Activated CD8-positive, alpha-beta memory T cell treated with anti-CD3 and anti-CD28 coated beads, Interleukin-2, amount 10 ng/mL, durations not matched to agents 7 days and 5 days (primary cell): ENCODE measurements at regions of chr6 and their contacts with region 1.

Region 1: GRCh38 chr6:32971581-32972352 is 3.4 kb downstream of the BRD2 start:
- DNase-seq: peak; percentile 100
- ATAC-seq: peak; percentile 41
- H3K4me3 Mint-ChIP-seq: peak overlapping the region; percentile 94
- H3K27ac Mint-ChIP-seq: peak overlapping the region; percentile 99
- H3K4me1 Mint-ChIP-seq: peaks cover 24% of the 10 kb centered on the region
- H3K27me3 Mint-ChIP-seq: no peaks in the 10 kb centered on the region

Region 2: DNA sequence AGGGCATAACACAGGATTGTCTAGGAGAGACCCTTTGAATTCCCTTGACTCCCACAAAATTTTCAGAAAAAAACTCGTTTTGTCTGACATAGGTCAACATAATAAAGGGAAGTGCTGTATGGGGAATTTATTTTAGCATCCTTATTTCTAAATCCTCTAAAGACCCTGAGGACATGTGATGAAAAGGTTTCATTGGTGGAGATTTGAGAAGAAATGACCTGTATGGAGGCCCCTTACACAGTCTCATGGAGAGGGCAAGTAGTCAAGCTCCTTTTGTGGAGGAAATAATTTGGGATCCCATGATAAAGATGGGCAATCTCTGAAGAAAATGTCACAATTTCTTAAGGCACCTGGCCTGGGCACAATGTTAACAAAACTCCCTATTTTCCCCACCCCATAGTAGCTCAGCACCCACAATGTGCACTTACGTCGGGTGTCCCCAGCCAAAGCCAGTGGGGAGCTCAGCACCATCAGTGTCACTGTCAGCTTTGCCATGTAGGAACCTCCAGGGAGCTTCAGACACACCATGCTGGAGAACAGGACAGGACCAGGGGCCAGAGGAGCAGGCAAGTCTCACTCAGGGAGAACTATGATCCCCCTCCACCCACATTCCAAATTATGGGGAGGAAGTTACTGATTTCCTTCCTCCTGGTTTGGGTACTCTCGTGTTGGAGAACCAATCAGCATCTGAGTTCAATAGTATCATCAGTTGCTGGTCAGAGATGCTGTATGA is 441.9 kb before region 1 on chr6 and contains the start of gene HLA-DRB5:
- CTCF ChIA-PET with region 1: no interaction called
- DNase-seq: peak; percentile 49
- ATAC-seq: peak; percentile 91
- H3K4me3 Mint-ChIP-seq: peak within 1 kb of the TSS; percentile 87
- H3K27ac Mint-ChIP-seq: peak within 1 kb of the TSS; percentile 88
- H3K4me1 Mint-ChIP-seq: peaks cover 12% of the 10 kb centered on the region
- H3K27me3 Mint-ChIP-seq: peaks cover 4% of the 10 kb centered on the region
- total RNA-seq, gene HLA-DRB5: 2.9 to 5.3 TPM

Region 3: GRCh38 chr6:32843979-32844838 is 127.6 kb before region 1 on chr6 and contains the start of gene PSMB8:
- CTCF ChIA-PET with region 1: interaction called, 62 read pairs
- DNase-seq: peak; percentile 100
- ATAC-seq: peak; percentile 74
- H3K4me3 Mint-ChIP-seq: peak within 1 kb of the TSS; percentile 86
- H3K27ac Mint-ChIP-seq: peak within 1 kb of the TSS; percentile 95
- H3K4me1 Mint-ChIP-seq: peaks cover 64% of the 10 kb centered on the region
- H3K27me3 Mint-ChIP-seq: no peaks in the 10 kb centered on the region
- total RNA-seq, gene PSMB8: 461 to 464 TPM

Region 4: GRCh38 chr6:32885698-32886286 is 86.0 kb before region 1 on chr6:
- CTCF ChIA-PET with region 1: interaction called, 11 read pairs
- DNase-seq: no peak
- ATAC-seq: peak; percentile 73
- H3K4me3 Mint-ChIP-seq: no peak overlapping the region
- H3K27ac Mint-ChIP-seq: no peak overlapping the region
- H3K4me1 Mint-ChIP-seq: peaks cover 3% of the 10 kb centered on the region
- H3K27me3 Mint-ChIP-seq: peaks cover 11% of the 10 kb centered on the region

Region 5: DNA sequence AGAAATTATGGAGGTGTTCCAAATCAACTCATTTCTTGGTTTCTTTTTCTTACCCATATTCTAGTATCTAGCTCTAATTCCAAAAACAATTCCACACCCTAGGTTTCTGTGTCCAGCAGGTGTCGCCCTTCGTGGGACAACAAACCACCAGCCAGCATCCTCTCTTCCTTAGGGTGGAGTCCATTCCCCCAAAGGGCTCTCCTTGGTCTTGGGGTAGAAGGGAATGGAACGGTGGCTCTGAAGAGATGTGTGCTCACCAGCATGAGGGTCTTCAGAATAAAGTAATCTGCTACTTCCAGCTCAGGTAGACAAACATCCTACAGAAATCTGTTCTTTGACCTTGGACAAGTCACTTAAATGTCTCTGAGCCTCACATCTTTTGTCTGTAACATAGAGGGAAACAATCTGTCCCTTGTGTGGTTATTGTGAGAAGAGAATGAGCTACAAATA is 38.1 kb before region 1 on chr6:
- CTCF ChIA-PET with region 1: interaction called, 35 read pairs
- DNase-seq: peak; percentile 83
- ATAC-seq: peak; percentile 67
- H3K4me3 Mint-ChIP-seq: no peak overlapping the region
- H3K27ac Mint-ChIP-seq: no peak overlapping the region
- H3K4me1 Mint-ChIP-seq: peaks cover 23% of the 10 kb centered on the region
- H3K27me3 Mint-ChIP-seq: no peaks in the 10 kb centered on the region

Region 6: DNA sequence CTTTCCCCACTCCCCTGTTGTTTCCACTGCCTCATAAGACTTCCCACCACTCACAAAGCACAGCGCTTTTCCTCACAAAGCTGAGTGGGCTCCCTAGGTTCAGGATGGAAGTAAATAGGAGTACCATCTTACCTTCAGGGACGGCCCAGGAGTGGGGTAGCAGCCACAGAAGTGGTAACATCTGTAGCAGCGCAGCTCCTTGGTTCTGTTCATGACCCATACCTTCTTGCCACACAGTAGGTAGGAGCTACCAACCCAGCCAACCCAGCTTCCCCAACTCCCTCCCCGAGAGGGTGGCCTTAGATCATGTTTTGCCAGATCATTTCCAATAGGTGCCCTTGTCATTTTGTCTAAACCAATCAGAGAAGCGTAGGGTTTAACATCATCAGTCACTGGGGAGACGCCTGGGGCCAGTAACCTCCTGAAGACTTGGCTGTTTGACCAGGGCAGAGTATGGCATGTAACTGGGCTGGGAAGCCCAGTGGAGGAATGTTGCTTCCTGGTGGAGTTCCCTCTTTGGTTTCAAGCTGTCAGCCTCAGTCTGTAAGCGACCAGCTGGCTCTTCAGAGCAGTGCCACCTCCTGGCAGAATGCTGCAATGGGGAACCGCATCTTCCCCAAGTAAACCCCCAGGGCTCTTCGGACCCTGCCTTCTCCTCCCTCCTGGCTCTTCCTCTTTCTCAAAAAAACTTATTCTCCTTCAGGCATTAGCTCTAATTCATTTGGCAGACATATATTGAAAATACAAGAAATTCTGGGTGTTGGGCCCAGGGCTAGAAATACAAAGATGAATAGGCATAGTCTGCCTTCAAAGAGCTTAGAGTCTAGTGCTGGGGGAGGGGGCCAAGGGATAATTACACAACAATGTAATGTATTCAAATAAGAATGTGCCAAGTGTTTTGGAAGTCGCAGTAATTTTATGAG is 18.7 kb before region 1 on chr6 and contains the start of gene HLA-DMA:
- CTCF ChIA-PET with region 1: interaction called, 249 read pairs
- DNase-seq: peak; percentile 88
- ATAC-seq: peak; percentile 98
- H3K4me3 Mint-ChIP-seq: peak within 1 kb of the TSS; percentile 79
- H3K27ac Mint-ChIP-seq: peak within 1 kb of the TSS; percentile 86
- H3K4me1 Mint-ChIP-seq: peaks cover 59% of the 10 kb centered on the region
- H3K27me3 Mint-ChIP-seq: no peaks in the 10 kb centered on the region
- total RNA-seq, gene HLA-DMA: 57.9 to 60.9 TPM

Region 7: GRCh38 chr6:33235221-33235634 is 263.5 kb after region 1 on chr6:
- CTCF ChIA-PET with region 1: no interaction called
- DNase-seq: no peak
- ATAC-seq: no peak
- H3K4me3 Mint-ChIP-seq: no peak overlapping the region
- H3K27ac Mint-ChIP-seq: no peak overlapping the region
- H3K4me1 Mint-ChIP-seq: no peaks in the 10 kb centered on the region
- H3K27me3 Mint-ChIP-seq: peaks cover 42% of the 10 kb centered on the region